Activated CD4-positive, alpha-beta T cell treated with anti-CD3 and anti-CD28 coated beads for 36 hours (primary cell): ENCODE measurements at regions of chr12 and their contacts with region 1.

Region 1: GRCh38 chr12:110468212-110469048 is at the starts of genes FAM216A and GPN3:
- DNase-seq: peak; percentile 97
- ATAC-seq: peak; percentile 78
- H3K4me3 Mint-ChIP-seq: peak within 1 kb of the TSS; percentile 89
- H3K27ac Mint-ChIP-seq: peak within 1 kb of the TSS; percentile 98
- H3K4me1 Mint-ChIP-seq: peaks cover 33% of the 10 kb centered on the region
- H3K27me3 Mint-ChIP-seq: no peaks in the 10 kb centered on the region
- total RNA-seq, gene FAM216A: 55.2 to 57.5 TPM
- total RNA-seq, gene GPN3: 37.8 to 62.0 TPM

Region 2: DNA sequence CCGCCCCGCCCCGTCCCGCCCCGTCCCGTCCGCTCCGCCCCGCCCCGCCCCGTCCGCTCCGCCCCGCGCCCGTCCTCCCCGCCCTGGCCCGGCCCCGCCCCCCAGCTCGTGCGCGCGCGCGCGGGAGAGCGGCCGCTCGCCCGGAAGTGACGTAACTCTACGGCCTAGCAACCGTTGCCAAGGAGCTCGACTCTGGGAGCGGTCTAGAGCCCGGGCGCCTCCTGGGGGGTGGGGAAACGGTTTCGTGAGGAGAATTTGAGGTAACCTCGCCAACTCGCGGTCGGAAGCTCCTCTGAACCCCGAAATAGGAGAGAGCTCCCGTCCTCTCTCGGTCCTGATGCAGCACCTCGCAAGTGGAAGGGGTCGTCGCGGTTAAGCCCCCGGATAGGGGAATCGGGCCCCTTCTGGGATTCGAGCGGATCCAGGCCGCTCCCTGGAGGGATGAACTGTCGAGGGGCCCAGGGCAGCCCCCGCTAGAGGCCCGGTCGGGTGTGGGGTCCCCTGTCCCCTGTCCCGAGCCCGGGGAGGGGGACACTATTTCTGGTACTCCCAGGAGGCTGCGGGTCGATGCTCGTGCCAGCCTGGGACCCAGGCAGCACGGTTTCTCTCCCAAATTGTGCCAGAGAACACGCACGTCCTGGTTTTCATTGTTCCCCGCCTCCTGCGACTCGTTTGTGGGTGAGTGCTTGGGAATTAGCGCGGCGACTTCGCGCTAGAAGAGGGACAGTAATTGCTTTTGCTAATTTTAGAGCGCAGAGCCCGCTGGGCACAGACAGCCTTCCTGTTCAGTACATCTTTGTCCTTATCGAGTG is 344.0 kb before region 1 on chr12 and contains the start of gene IFT81:
- CTCF ChIA-PET with region 1: no interaction called
- POLR2A ChIA-PET with region 1: no interaction called
- intact Hi-C with region 1: loop called in 1 of 2 experiments (anchors 1 kb)
- DNase-seq: peak; percentile 98
- ATAC-seq: peak; percentile 91
- H3K4me3 Mint-ChIP-seq: peak within 1 kb of the TSS; percentile 83
- H3K27ac Mint-ChIP-seq: peak within 1 kb of the TSS; percentile 81
- H3K4me1 Mint-ChIP-seq: peaks cover 7% of the 10 kb centered on the region
- H3K27me3 Mint-ChIP-seq: peaks cover 4% of the 10 kb centered on the region
- total RNA-seq, gene IFT81: 3.5 TPM

Region 3: GRCh38 chr12:110449799-110450497 is 18.5 kb before region 1 on chr12 and contains the start of gene ARPC3:
- CTCF ChIA-PET with region 1: interaction called, 43 read pairs
- POLR2A ChIA-PET with region 1: interaction called, 27 read pairs
- intact Hi-C with region 1: loop called (anchors 1 kb)
- DNase-seq: peak; percentile 98
- ATAC-seq: peak; percentile 99
- H3K4me3 Mint-ChIP-seq: peak within 1 kb of the TSS; percentile 97
- H3K27ac Mint-ChIP-seq: peak within 1 kb of the TSS; percentile 100
- H3K4me1 Mint-ChIP-seq: peaks cover 38% of the 10 kb centered on the region
- H3K27me3 Mint-ChIP-seq: no peaks in the 10 kb centered on the region
- total RNA-seq, gene ARPC3: 244 to 422 TPM

Region 4: GRCh38 chr12:110583137-110584059 is 115.0 kb after region 1 on chr12 and contains the start of gene PPTC7:
- CTCF ChIA-PET with region 1: interaction called, 3 read pairs
- POLR2A ChIA-PET with region 1: interaction called, 3 read pairs
- intact Hi-C with region 1: loop called (anchors 1 kb)
- DNase-seq: peak; percentile 99
- ATAC-seq: peak; percentile 86
- H3K4me3 Mint-ChIP-seq: peak within 1 kb of the TSS; percentile 91
- H3K27ac Mint-ChIP-seq: peak within 1 kb of the TSS; percentile 99
- H3K4me1 Mint-ChIP-seq: peaks cover 59% of the 10 kb centered on the region
- H3K27me3 Mint-ChIP-seq: no peaks in the 10 kb centered on the region
- total RNA-seq, gene PPTC7: 33.4 to 36.5 TPM

Region 5: GRCh38 chr12:110742718-110743570 is 274.5 kb after region 1 on chr12 and contains the start of gene PPP1CC:
- CTCF ChIA-PET with region 1: no interaction called
- POLR2A ChIA-PET with region 1: interaction called, 5 read pairs
- intact Hi-C with region 1: loop called in 1 of 2 experiments (anchors 2 kb)
- DNase-seq: peak; percentile 95
- ATAC-seq: peak; percentile 85
- H3K4me3 Mint-ChIP-seq: peak within 1 kb of the TSS; percentile 98
- H3K27ac Mint-ChIP-seq: peak within 1 kb of the TSS; percentile 99
- H3K4me1 Mint-ChIP-seq: peaks cover 34% of the 10 kb centered on the region
- H3K27me3 Mint-ChIP-seq: no peaks in the 10 kb centered on the region
- total RNA-seq, gene PPP1CC: 201 to 283 TPM

Region 6: DNA sequence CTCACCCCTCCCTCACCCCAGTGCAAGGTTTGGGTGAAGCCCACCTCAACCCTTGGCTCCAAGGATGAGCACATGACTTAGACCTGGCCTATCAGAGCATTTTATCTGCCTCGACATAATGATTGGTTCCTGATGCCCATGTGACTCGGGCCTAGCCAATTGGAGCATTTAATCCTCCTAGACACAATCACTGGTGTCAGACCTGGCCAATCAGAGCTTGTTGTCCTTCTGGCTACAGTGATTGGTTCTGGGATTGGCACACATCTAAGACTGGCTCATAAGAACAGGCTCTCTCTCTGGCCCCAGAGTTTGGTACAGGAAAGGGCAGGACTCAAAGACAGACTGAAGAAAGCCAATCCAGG is 525.0 kb after region 1 on chr12:
- CTCF ChIA-PET with region 1: no interaction called
- POLR2A ChIA-PET with region 1: no interaction called
- intact Hi-C with region 1: no loop called
- DNase-seq: no peak
- ATAC-seq: no peak
- H3K4me3 Mint-ChIP-seq: no peak overlapping the region
- H3K27ac Mint-ChIP-seq: no peak overlapping the region
- H3K4me1 Mint-ChIP-seq: no peaks in the 10 kb centered on the region
- H3K27me3 Mint-ChIP-seq: no peaks in the 10 kb centered on the region

Region 7: DNA sequence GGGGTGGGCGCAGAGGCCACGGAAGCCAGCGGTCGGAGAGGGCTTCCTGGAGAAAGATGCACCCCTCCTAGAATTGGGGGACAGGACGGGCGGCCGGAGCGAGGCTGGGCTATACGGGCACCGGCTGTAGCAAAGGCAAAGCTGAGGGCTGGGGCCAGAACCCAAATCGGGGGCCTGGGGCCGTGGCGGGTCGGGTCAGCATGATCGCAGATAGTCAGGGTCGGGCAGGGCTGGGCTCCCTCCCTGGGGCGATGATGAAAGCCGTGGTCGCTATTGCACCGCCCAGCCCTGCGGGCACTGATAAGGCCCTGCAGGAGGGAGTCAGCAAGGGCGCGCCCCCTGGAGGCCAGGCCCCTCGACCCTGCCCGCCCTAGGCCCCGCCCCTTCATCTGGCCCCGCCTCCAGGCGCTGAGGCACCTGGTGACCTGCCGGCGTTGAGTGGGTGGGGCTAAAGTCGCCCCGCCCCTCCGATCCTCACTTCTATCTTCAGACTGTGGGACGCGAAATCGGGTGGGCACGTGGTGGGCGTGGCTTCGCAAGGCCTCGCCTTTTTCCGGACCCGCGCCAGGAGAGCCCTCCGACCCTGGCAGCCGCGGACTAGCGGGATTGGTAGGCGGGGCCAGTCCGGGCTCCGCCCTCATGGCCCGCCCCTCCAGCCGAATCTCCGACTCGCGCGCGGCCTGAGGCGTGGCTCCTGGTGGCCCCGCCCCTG is 936.9 kb after region 1 on chr12:
- CTCF ChIA-PET with region 1: no interaction called
- POLR2A ChIA-PET with region 1: no interaction called
- intact Hi-C with region 1: loop called in 1 of 2 experiments (anchors 1 kb)
- DNase-seq: peak; percentile 100
- ATAC-seq: peak; percentile 77
- H3K4me3 Mint-ChIP-seq: peak overlapping the region; percentile 76
- H3K27ac Mint-ChIP-seq: peak overlapping the region; percentile 96
- H3K4me1 Mint-ChIP-seq: peaks cover 51% of the 10 kb centered on the region
- H3K27me3 Mint-ChIP-seq: no peaks in the 10 kb centered on the region